T-cell (primary cell): ENCODE measurements at regions of chr1 and their contacts with region 1.

Region 1: GRCh38 chr1:26378088-26378878 is 5.7 kb upstream of the ZNF683 start:
- DNase-seq: peak; percentile 60 to 89 (median 77)
- ATAC-seq: peak; percentile 97 to 98 (median 98)
- H3K4me3 ChIP-seq: peak overlapping the region; percentile 23 to 29
- H3K4me3 Mint-ChIP-seq: peak overlapping the region; percentile 59 to 74 (median 59)
- H3K27ac ChIP-seq: peak overlapping the region; percentile 85
- H3K27ac Mint-ChIP-seq: peak overlapping the region; percentile 87 to 99
- H3K4me1 ChIP-seq: peaks cover 45 to 70% of the 10 kb centered on the region in 2 experiments
- H3K4me1 Mint-ChIP-seq: peaks cover 71 to 78% (median 72%) of the 10 kb centered on the region in 3 donors
- H3K27me3 ChIP-seq: no peaks in the 10 kb centered on the region
- H3K27me3 Mint-ChIP-seq: no peaks in the 10 kb centered on the region

Region 2: DNA sequence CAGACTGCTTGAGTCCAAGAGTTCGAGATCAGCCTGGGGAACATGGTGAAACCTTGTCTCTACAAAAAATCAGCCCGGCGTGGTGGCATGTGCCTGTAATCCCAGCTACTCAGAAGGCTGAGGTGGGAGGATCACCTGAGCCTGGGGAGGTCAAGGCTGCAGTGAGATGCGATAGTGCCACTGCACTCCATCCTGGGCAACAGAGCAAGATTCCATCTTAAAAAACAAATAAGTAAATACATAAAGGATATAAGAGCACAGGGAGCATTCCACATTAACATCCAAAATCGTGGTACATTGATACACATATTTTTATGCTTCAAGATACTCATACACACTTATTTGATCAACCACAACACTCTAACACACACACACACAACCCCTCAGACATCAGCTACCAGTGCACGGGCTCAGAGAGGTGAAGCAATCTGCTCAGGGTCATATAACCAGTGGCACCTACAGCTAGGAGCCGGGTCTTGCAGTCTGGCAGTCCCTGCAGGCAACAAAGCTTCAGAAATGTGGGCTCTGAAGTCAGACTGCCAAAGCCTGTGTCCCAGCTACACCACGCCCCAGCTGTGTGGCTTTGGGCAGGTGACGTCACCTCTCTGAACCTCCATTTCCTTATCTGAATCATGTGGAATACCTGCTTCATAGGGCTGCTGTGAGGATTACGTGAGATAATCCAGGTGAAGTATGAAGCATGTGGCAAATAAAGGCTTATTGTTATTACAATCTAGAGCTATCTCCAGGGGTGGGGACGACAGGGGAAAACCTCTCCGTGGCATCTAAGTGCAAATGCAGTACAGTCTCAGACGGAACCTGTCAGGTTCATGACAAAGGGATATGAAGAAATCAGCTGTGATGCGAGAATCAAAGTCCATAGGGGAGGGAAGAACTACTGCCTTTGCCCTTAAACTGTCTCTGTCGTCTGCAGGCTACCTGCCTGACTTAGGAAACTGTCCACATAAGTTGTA is 19.6 kb before region 1 on chr1:
- CTCF ChIA-PET with region 1: interaction called, 10 to 18 read pairs
- POLR2A ChIA-PET with region 1: interaction called in 1 of 2 experiments, 3 read pairs
- DNase-seq: peak; percentile 25 to 86 (median 68)
- ATAC-seq: peak; percentile 76 to 87 (median 82)
- H3K4me3 ChIP-seq: peak overlapping the region in 1 of 2 donors; percentile 4
- H3K4me3 Mint-ChIP-seq: peak overlapping the region; percentile 41 to 78 (median 57)
- H3K27ac ChIP-seq: no peak overlapping the region
- H3K27ac Mint-ChIP-seq: peak overlapping the region; percentile 29 to 60
- H3K4me1 ChIP-seq: peaks cover 12 to 54% of the 10 kb centered on the region in 2 experiments
- H3K4me1 Mint-ChIP-seq: peaks cover 41 to 63% (median 45%) of the 10 kb centered on the region in 3 donors
- H3K27me3 ChIP-seq: peaks cover 0 to 23% of the 10 kb centered on the region in 2 experiments
- H3K27me3 Mint-ChIP-seq: peaks cover 4 to 16% of the 10 kb centered on the region in 2 donors

Region 3: GRCh38 chr1:26363549-26364448 is 14.5 kb before region 1 on chr1:
- CTCF ChIA-PET with region 1: interaction called, 10 to 18 read pairs
- POLR2A ChIA-PET with region 1: interaction called in 1 of 2 experiments, 3 read pairs
- DNase-seq: peak; percentile 56 to 91 (median 79)
- ATAC-seq: peak; percentile 72 to 85 (median 76)
- H3K4me3 ChIP-seq: no peak overlapping the region
- H3K4me3 Mint-ChIP-seq: peak overlapping the region in 1 of 3 donors; percentile 37
- H3K27ac ChIP-seq: no peak overlapping the region
- H3K27ac Mint-ChIP-seq: peak overlapping the region in 1 of 2 donors; percentile 79
- H3K4me1 ChIP-seq: peaks cover 12 to 76% of the 10 kb centered on the region in 2 experiments
- H3K4me1 Mint-ChIP-seq: peaks cover 46 to 78% (median 61%) of the 10 kb centered on the region in 3 donors
- H3K27me3 ChIP-seq: peaks cover 0 to 33% of the 10 kb centered on the region in 2 experiments
- H3K27me3 Mint-ChIP-seq: peaks cover 4 to 16% of the 10 kb centered on the region in 2 donors